Calu3 (cell line): ENCODE measurements at regions of chr4 and their contacts with region 1.

Region 1: GRCh38 chr4:52983563-52984303 is 121.6 kb downstream of the RASL11B start:
- DNase-seq: peak; percentile 20
- H3K4me3 Mint-ChIP-seq: no peak overlapping the region
- H3K27ac Mint-ChIP-seq: no peak overlapping the region
- H3K4me1 Mint-ChIP-seq: no peaks in the 10 kb centered on the region
- H3K27me3 Mint-ChIP-seq: no peaks in the 10 kb centered on the region
- CTCF ChIP-seq: peak; percentile 48

Region 2: GRCh38 chr4:52234561-52235440 is 748.9 kb before region 1 on chr4:
- CTCF ChIA-PET with region 1: interaction called, 4 read pairs
- intact Hi-C with region 1: loop called (anchors 2 kb)
- DNase-seq: no peak
- H3K4me3 Mint-ChIP-seq: no peak overlapping the region
- H3K27ac Mint-ChIP-seq: no peak overlapping the region
- H3K4me1 Mint-ChIP-seq: no peaks in the 10 kb centered on the region
- H3K27me3 Mint-ChIP-seq: peaks cover 14% of the 10 kb centered on the region
- CTCF ChIP-seq: no peak

Region 3: GRCh38 chr4:52545099-52546069 is 438.3 kb before region 1 on chr4:
- CTCF ChIA-PET with region 1: interaction called, 11 read pairs
- intact Hi-C with region 1: loop called (anchors 2 kb)
- DNase-seq: peak; percentile 74
- H3K4me3 Mint-ChIP-seq: no peak overlapping the region
- H3K27ac Mint-ChIP-seq: no peak overlapping the region
- H3K4me1 Mint-ChIP-seq: no peaks in the 10 kb centered on the region
- H3K27me3 Mint-ChIP-seq: no peaks in the 10 kb centered on the region
- CTCF ChIP-seq: peak; percentile 82

Region 4: DNA sequence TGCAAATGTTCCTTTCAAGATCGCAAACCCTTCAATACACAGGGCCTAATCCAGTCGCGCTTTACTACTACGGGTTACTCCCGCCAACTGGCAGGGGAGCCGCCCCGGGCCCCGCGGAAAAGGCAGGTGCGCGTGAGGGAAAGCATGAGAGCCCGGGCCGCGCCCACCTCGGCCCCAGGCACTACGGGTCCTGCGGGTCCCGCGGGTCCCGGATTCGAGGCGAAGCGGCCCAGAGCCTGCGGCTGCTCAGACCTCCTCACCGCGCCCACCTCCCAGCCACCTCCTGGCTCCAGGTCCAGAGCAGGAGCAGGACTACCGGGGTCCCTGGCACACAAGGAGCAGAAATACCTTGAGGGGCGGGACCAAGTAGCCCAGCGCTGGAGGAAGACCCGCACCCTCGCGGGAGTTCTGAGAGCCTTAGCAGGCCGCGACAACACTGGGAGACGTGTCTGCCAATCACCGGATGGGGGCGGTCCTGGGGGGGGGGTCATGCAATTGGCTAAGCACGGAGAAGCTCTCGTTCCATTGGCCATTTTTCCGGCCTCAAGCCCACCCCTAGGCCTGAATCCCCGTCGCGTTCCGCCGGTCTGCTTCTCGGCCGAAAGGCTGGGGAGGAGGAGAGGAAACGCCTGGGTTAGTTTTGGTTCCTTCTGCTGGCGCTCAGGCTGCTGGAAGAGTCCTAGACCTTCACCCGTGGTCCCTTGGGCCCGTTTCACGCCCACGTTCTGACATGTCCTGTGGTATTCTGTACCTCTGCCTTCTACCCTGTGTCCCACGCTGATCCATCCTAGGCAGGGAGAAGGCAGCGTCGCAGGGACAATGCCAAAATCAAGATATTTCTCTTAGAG is 261.5 kb before region 1 on chr4:
- CTCF ChIA-PET with region 1: interaction called, 6 read pairs
- intact Hi-C with region 1: loop called (anchors 5 kb)
- DNase-seq: peak; percentile 81
- H3K4me3 Mint-ChIP-seq: peak overlapping the region; percentile 52
- H3K27ac Mint-ChIP-seq: peak overlapping the region; percentile 38
- H3K4me1 Mint-ChIP-seq: peaks cover 8% of the 10 kb centered on the region
- H3K27me3 Mint-ChIP-seq: no peaks in the 10 kb centered on the region
- CTCF ChIP-seq: no peak

Region 5: GRCh38 chr4:52911684-52912294 is 71.9 kb before region 1 on chr4:
- CTCF ChIA-PET with region 1: interaction called, 3 read pairs
- intact Hi-C with region 1: loop called (anchors 5 kb)
- DNase-seq: peak; percentile 84
- H3K4me3 Mint-ChIP-seq: no peak overlapping the region
- H3K27ac Mint-ChIP-seq: no peak overlapping the region
- H3K4me1 Mint-ChIP-seq: peaks cover 19% of the 10 kb centered on the region
- H3K27me3 Mint-ChIP-seq: no peaks in the 10 kb centered on the region
- CTCF ChIP-seq: peak; percentile 70

Region 6: DNA sequence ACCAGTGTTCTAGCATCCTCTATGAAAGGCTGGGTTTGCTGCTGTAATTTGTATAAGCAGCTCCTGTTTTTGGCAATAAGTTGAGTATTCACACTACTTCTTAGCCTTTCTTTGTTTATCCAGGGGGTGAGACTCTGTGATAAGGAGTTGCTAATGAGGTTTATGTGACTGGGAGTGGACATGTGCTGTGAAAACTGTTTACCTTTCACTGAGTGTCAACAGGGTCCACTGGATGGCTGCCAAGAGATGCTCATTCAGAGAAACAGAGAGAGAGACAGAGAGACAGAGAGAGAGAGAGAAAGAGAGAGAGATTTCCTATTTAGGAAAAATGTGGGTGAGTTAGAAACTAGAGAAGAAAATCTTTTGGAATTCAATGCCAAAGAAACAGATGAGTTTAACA is 846.8 kb after region 1 on chr4:
- CTCF ChIA-PET with region 1: no interaction called
- intact Hi-C with region 1: no loop called
- DNase-seq: no peak
- H3K4me3 Mint-ChIP-seq: no peak overlapping the region
- H3K27ac Mint-ChIP-seq: no peak overlapping the region
- H3K4me1 Mint-ChIP-seq: no peaks in the 10 kb centered on the region
- H3K27me3 Mint-ChIP-seq: peaks cover 34% of the 10 kb centered on the region
- CTCF ChIP-seq: no peak